Dorsolateral prefrontal cortex (tissue), 120 donors: ENCODE measurements at regions of chr18 and their contacts with region 1.

Region 1: GRCh38 chr18:28176933-28177827 is at the start of gene CDH2:
- DNase-seq: peak; percentile 46 to 78 (median 74)
- H3K4me3 ChIP-seq: peak within 1 kb of the TSS; percentile 65 to 92 (median 80)
- H3K27ac ChIP-seq: peak within 1 kb of the TSS; percentile 80 to 98 (median 96)
- H3K27me3 ChIP-seq: no peaks in the 10 kb centered on the region
- CTCF ChIP-seq: peak in 29 of 56 donors; percentile 8 to 42 (median 25)
- total RNA-seq, gene CDH2: 44.8 to 109 (median 82.2) TPM

Region 2: GRCh38 chr18:28003451-28003850 is 173.7 kb before region 1 on chr18:
- intact Hi-C with region 1: loop called (anchors 5 kb)
- DNase-seq: peak in 1 of 10 donors; percentile 11
- H3K4me3 ChIP-seq: peak overlapping the region in 11 of 59 donors; percentile 0 to 45 (median 12)
- H3K27ac ChIP-seq: peak overlapping the region in 55 of 59 donors; percentile 3 to 85 (median 64)
- H3K27me3 ChIP-seq: no peaks in the 10 kb centered on the region
- CTCF ChIP-seq: no peak

Region 3: DNA sequence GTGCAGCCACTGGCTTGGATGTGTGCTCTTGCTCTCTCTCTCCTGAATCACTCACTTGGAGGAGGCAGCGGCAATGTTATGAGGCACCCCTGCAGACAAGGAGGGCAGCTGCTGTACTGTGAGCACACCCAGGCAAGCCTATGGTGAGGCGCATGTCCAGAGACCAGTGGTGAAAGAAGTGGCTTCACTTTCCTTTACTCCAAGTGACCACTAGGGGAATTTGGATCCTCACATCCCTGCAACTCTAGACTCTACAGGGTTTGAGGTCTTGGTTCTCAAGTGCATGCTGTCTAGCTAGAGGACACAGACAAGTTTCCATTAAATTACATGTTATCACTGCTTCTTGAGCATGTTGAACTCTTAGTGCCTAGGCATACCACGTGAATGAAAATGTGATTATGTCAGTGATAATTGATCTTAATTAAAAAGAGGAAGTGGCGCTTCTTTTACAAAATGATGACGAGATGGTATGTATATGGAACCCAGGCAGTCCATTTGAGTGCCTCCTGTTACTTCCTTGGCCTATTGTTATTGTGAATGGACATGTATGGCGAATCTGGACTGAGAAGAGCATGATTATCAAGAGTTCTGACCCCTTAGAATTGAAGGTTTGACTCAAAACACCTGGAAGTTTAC is 180.7 kb after region 1 on chr18:
- intact Hi-C with region 1: no loop called
- DNase-seq: no peak
- H3K4me3 ChIP-seq: no peak overlapping the region
- H3K27ac ChIP-seq: no peak overlapping the region
- H3K27me3 ChIP-seq: no peaks in the 10 kb centered on the region
- CTCF ChIP-seq: peak in 10 of 56 donors; percentile 11 to 29 (median 14)